HEK293 (cell line): ENCODE measurements at regions of chr1 and their contacts with region 1.

Region 1: DNA sequence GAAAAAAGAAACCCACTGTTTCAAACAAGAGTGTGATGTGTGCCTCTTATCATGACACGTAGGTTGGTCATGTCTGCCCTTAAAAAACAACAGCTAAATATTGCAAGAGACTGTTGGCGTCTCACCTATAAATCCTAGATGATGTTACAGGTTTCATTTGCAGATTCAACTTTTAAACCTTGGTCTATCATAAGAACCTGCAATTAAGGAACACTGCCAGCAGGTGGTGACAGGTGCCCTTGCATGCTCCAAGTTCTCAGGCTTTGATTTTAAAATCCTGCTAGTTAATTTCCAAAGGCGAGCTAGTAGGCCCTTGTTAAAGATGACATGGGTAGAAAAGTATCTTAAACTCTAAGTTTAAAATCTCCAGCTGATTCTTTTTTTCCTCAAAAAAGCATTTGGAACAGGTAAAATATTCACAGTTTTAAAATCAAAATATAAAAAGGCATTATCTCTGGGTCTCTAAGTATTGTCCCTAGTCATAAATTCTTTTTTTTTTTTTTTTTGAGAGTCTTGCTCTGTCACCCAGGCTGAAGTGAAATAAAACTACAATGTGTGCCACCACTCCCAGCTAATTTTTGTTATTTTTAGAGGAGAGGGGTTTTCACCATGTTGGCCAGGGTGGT is 39.1 kb downstream of the CLSTN1 start:
- H3K4me3 ChIP-seq: no peak overlapping the region
- H3K27ac ChIP-seq: no peak overlapping the region
- H3K4me1 ChIP-seq: 0 out of 2 replicates have a peak, but pooled peaks cover 3% of the 10 kb centered on the region
- CTCF ChIP-seq: peak; percentile 40

Region 2: GRCh38 chr1:9634582-9634981 is 150.0 kb before region 1 on chr1:
- CTCF ChIA-PET with region 1: no interaction called
- POLR2A ChIA-PET with region 1: no interaction called
- H3K4me3 ChIP-seq: no peak overlapping the region
- H3K27ac ChIP-seq: no peak overlapping the region
- H3K4me1 ChIP-seq: no peaks in the 10 kb centered on the region
- CTCF ChIP-seq: no peak

Region 3: GRCh38 chr1:9766759-9767442 is 17.7 kb before region 1 on chr1:
- CTCF ChIA-PET with region 1: interaction called, 13 read pairs
- POLR2A ChIA-PET with region 1: no interaction called
- H3K4me3 ChIP-seq: no peak overlapping the region
- H3K27ac ChIP-seq: no peak overlapping the region
- H3K4me1 ChIP-seq: no peaks in the 10 kb centered on the region
- CTCF ChIP-seq: no peak

Region 4: DNA sequence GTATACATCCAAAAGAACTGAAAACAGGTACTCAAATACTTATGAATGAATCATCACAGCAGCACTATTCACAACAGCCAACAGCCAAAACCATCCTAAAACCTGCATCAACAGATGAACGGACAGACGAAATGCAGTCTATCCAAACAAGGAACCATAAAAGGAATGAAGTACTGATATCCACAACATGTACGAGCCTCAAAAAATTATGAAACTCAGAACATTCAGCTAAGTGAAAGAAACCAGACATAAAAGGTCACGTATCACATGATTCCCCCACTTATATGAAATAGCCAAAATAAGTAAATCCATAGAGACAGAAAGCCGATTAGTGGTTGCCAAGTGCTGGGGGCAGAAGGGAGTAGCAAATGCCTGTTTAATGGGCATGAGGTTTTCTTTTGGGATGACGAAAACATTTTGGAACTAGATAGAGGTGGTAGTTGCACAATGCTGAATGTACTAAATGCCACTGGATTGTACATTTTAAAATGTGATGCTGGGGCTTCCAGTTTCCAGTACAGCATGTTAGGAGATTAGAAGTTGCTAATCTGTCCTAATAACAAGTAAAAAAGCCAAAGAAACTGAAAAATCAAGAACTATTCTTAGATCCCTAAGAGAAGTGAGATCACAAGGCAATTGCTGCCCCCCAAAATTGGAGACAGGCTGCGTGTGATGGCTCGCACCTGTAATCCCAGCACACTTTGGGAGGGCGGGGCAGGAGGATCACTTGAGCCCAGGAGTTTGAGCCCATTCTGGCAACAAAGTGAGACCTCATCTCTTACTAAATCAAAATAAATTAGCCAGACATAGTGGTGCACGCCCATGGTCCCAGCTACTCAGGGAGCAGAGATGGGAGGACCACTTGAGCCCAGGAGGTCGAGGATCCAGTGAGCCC is 13.9 kb after region 1 on chr1:
- CTCF ChIA-PET with region 1: interaction called, 14 read pairs
- POLR2A ChIA-PET with region 1: no interaction called
- H3K4me3 ChIP-seq: no peak overlapping the region
- H3K27ac ChIP-seq: no peak overlapping the region
- H3K4me1 ChIP-seq: peaks cover 17% of the 10 kb centered on the region
- CTCF ChIP-seq: no peak

Region 5: GRCh38 chr1:9825454-9826090 is 41.0 kb after region 1 on chr1:
- CTCF ChIA-PET with region 1: interaction called, 24 read pairs
- POLR2A ChIA-PET with region 1: interaction called, 5 read pairs
- H3K4me3 ChIP-seq: no peak overlapping the region
- H3K27ac ChIP-seq: no peak overlapping the region
- H3K4me1 ChIP-seq: peaks cover 21% of the 10 kb centered on the region
- CTCF ChIP-seq: 0 out of 2 replicates have a peak, but pooled peaks have one; percentile 28